Heart left ventricle (tissue), 16 donors: ENCODE measurements at regions of chr2 and their contacts with region 1.

Region 1: DNA sequence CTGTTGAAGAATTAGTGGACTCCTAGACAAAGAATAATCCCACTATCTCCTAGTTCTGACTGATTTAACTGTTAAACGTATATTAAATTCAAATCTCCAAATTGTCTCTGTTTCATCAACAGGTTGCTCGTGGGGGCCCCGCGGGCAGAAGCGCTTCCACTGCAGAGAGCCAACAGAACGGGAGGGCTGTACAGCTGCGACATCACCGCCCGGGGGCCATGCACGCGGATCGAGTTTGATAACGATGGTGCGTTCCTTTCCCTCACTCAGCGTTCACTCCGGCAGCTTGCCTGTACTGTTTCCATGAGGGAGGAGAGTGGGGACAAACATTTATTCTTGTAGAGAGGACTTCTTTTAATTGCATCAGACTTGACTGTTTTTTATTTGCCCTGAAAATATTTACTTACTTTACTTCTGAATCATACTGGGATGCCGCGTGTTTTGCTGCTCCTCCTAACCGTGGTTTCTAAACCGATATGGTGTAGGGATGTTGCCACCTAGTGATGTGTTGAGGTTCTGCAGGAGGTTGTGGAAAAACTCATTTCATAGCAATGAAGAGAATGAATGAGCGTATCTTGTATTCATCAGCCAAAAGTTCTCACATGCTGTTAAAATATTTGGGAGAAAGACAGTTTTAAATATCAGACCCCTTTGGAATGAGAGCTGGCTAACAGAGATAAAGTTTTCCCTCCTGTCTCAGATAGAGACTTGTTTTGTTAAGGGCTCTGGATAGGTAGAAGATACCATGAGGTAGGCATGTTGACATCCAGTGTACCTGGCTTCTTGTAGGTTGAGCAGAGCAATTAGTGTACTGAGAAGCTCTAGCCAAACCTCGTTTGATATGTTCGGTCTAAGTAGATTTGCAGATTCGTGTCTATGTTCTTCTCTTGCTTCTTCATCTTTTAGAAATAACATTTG is 38.3 kb downstream of the ITGA6 start:
- DNase-seq: peak in 4 of 5 donors; percentile 46 to 58 (median 55)
- ATAC-seq: peak; percentile 69 to 78 (median 72)
- H3K4me3 ChIP-seq: peak overlapping the region in 8 of 12 donors; percentile 9 to 36 (median 21)
- H3K27ac ChIP-seq: peak overlapping the region in 4 of 12 donors; percentile 4 to 78 (median 15)
- H3K4me1 ChIP-seq: peaks cover 0 to 49% (median 28%) of the 10 kb centered on the region in 12 donors
- H3K27me3 ChIP-seq: peaks cover 0 to 4% (median 0%) of the 10 kb centered on the region in 9 donors
- CTCF ChIP-seq: peak; percentile 74 to 92 (median 86)
- POLR2A ChIP-seq: no peak

Region 2: GRCh38 chr2:171598713-171599319 is 866.9 kb before region 1 on chr2:
- intact Hi-C with region 1: loop called in 1 of 10 experiments (anchors 5 kb)
- DNase-seq: peak in 1 of 5 donors; percentile 22
- ATAC-seq: peak; percentile 54 to 84 (median 66)
- H3K4me3 ChIP-seq: no peak overlapping the region
- H3K27ac ChIP-seq: no peak overlapping the region
- H3K4me1 ChIP-seq: peaks cover 0 to 3% (median 0%) of the 10 kb centered on the region in 12 donors
- H3K27me3 ChIP-seq: peaks cover 0 to 24% (median 0%) of the 10 kb centered on the region in 9 donors
- CTCF ChIP-seq: peak; percentile 60 to 83 (median 72)
- POLR2A ChIP-seq: no peak

Region 3: GRCh38 chr2:172172513-172173173 is 293.0 kb before region 1 on chr2:
- intact Hi-C with region 1: loop called (anchors 1 to 2 kb)
- DNase-seq: peak; percentile 60 to 83 (median 72)
- ATAC-seq: peak; percentile 93 to 100 (median 99)
- H3K4me3 ChIP-seq: peak overlapping the region; percentile 32 to 76 (median 62)
- H3K27ac ChIP-seq: peak overlapping the region in 4 of 12 donors; percentile 41 to 74 (median 52)
- H3K4me1 ChIP-seq: peaks cover 0 to 13% (median 6%) of the 10 kb centered on the region in 12 donors
- H3K27me3 ChIP-seq: peaks cover 0 to 23% (median 0%) of the 10 kb centered on the region in 9 donors
- CTCF ChIP-seq: peak; percentile 64 to 92 (median 88)
- POLR2A ChIP-seq: no peak

Region 4: GRCh38 chr2:172279813-172280212 is 185.9 kb before region 1 on chr2:
- intact Hi-C with region 1: loop called in 4 of 10 experiments (anchors 5 to 10 kb)
- DNase-seq: no peak
- ATAC-seq: no peak
- H3K4me3 ChIP-seq: no peak overlapping the region
- H3K27ac ChIP-seq: no peak overlapping the region
- H3K4me1 ChIP-seq: peaks cover 0 to 49% (median 9%) of the 10 kb centered on the region in 12 donors
- H3K27me3 ChIP-seq: no peaks in the 10 kb centered on the region
- CTCF ChIP-seq: no peak
- POLR2A ChIP-seq: no peak

Region 5: GRCh38 chr2:172427256-172427989 is 38.3 kb before region 1 on chr2 and contains the start of gene ITGA6:
- intact Hi-C with region 1: loop called in 9 of 10 experiments (anchors 2 to 5 kb)
- DNase-seq: peak; percentile 76 to 86 (median 78)
- ATAC-seq: peak; percentile 16 to 86 (median 76)
- H3K4me3 ChIP-seq: peak within 1 kb of the TSS; percentile 64 to 95 (median 86)
- H3K27ac ChIP-seq: peak within 1 kb of the TSS; percentile 72 to 95 (median 90)
- H3K4me1 ChIP-seq: peaks cover 0 to 48% (median 24%) of the 10 kb centered on the region in 12 donors
- H3K27me3 ChIP-seq: peaks cover 0 to 24% (median 0%) of the 10 kb centered on the region in 9 donors
- CTCF ChIP-seq: peak in 8 of 12 donors; percentile 17 to 52 (median 33)
- POLR2A ChIP-seq: peak in 1 of 2 donors; percentile 90
- total RNA-seq, gene ITGA6: 40.5 to 84.8 (median 51.2) TPM

Region 6: GRCh38 chr2:172710584-172711024 is 244.9 kb after region 1 on chr2:
- intact Hi-C with region 1: no loop called
- DNase-seq: peak in 1 of 5 donors; percentile 35
- ATAC-seq: peak; percentile 78 to 84 (median 82)
- H3K4me3 ChIP-seq: no peak overlapping the region
- H3K27ac ChIP-seq: peak overlapping the region in 9 of 12 donors; percentile 24 to 65 (median 53)
- H3K4me1 ChIP-seq: peaks cover 0 to 18% (median 3%) of the 10 kb centered on the region in 12 donors
- H3K27me3 ChIP-seq: peaks cover 0 to 6% (median 0%) of the 10 kb centered on the region in 9 donors
- CTCF ChIP-seq: peak; percentile 34 to 74 (median 56)
- POLR2A ChIP-seq: no peak